MCF 10A (cell line): ENCODE measurements at regions of chr1 and their contacts with region 1.

Region 1: DNA sequence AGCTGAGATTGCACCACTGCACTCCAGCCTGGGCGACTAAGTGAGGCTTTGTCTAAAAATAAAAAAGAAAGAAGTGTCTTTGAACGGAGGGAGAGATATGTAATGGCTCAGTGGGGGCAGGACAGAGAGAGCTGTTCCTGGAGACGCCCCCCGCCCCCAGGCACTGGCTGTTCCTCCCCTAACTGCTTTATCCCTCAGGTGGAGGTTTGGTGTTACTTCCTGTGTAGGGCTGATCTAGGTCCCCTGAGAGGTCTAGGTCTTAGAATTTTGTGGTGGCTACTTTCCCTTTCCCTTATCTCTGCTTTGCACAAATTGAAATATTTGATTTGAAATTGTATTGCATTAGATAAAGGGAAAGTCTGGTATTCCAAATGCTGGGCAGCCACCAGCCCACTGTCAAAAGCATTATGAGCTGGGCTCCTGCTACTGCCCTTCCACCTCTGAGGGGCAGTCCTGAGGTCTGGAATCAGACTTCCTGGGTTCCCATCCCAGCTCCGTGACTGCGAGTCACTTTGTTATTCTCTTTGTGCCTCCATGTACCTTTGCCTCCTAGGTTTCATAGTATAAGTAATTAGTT is 134.8 kb upstream of the KIF26B start:
- DNase-seq: no peak
- H3K4me3 Mint-ChIP-seq: no peak overlapping the region
- H3K27ac Mint-ChIP-seq: no peak overlapping the region
- H3K4me1 Mint-ChIP-seq: no peaks in the 10 kb centered on the region
- H3K27me3 Mint-ChIP-seq: no peaks in the 10 kb centered on the region
- CTCF ChIP-seq: no peak

Region 2: DNA sequence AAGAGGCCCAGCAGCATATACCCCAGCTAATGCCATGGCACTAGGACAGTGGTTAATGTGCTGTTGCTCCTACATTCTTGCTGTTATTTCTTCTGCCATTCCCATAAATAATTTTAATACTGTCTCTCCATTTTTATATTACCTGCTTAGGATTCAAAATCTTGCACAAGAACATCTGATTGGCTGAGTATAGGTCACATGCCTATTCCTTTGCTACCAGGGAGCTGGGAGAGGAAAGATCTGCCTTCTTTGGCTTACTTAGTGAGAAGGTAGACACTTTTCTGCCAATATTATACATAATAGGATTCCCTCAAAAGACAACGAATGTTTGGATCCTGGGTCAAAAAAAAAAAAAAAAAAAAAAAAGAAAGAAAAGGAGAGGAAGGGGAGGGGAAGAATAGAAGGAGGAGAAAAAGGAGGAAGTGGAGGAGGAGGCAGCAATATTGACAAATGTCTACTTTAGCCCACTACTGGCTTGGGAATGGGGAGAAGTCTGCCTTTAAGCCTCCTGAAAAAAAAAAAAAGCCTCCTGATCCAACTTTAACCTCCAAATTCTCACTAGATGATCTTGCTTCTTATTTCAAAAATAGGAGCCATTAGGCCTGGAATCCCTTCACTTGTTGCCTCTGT is 21.2 kb before region 1 on chr1:
- CTCF ChIA-PET with region 1: interaction called, 12 read pairs
- POLR2A ChIA-PET with region 1: interaction called, 7 read pairs
- intact Hi-C with region 1: no loop called
- DNase-seq: no peak
- H3K4me3 Mint-ChIP-seq: no peak overlapping the region
- H3K27ac Mint-ChIP-seq: no peak overlapping the region
- H3K4me1 Mint-ChIP-seq: peaks cover 16% of the 10 kb centered on the region
- H3K27me3 Mint-ChIP-seq: no peaks in the 10 kb centered on the region
- CTCF ChIP-seq: no peak

Region 3: DNA sequence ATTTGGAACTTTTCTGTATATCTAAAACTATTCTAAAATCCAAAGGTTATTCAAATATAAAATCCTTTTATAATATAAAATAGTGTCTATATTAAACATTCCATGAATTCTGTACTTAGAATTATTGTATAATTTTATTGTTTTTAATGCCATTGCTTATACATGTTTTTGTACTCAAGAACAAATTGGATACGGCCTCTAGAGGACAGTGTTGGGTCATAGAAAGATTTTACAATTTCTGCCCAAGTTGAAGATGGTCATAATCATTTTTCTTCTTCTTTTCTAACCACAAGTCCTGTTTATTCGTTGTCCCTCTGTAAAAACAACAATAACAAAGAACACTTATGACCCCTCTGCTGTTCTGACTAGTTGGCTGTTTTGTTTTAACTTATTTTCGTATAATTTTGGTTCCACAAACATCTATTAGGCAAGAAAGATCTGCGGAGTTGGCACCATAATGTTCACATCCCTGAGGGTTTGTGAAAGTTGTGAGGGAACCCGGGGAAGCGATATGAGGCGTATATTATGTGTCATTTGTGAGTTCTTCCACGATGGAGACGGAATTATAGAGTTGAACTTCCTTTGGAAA is 59.1 kb after region 1 on chr1:
- CTCF ChIA-PET with region 1: no interaction called
- POLR2A ChIA-PET with region 1: no interaction called
- intact Hi-C with region 1: no loop called
- DNase-seq: peak; percentile 73
- H3K4me3 Mint-ChIP-seq: no peak overlapping the region
- H3K27ac Mint-ChIP-seq: no peak overlapping the region
- H3K4me1 Mint-ChIP-seq: peaks cover 4% of the 10 kb centered on the region
- H3K27me3 Mint-ChIP-seq: no peaks in the 10 kb centered on the region
- CTCF ChIP-seq: peak; percentile 97